ENCODE measurements at regions of chr12 and their contacts with region 1.

Region 1: GRCh38 chr12:57063991-57064685 is 14.2 kb upstream of the MYO1A start:
- DNase-seq: no peak
- H3K4me3 ChIP-seq: no peak overlapping the region
- H3K27ac ChIP-seq: peak overlapping the region in 1 of 4 donors; percentile 35
- H3K4me1 ChIP-seq: peaks cover 0 to 2% (median 0%) of the 10 kb centered on the region in 4 donors
- H3K27me3 ChIP-seq: no peaks in the 10 kb centered on the region
- CTCF ChIP-seq: no peak
- EP300 ChIP-seq: no peak
- POLR2A ChIP-seq: no peak

Region 2: DNA sequence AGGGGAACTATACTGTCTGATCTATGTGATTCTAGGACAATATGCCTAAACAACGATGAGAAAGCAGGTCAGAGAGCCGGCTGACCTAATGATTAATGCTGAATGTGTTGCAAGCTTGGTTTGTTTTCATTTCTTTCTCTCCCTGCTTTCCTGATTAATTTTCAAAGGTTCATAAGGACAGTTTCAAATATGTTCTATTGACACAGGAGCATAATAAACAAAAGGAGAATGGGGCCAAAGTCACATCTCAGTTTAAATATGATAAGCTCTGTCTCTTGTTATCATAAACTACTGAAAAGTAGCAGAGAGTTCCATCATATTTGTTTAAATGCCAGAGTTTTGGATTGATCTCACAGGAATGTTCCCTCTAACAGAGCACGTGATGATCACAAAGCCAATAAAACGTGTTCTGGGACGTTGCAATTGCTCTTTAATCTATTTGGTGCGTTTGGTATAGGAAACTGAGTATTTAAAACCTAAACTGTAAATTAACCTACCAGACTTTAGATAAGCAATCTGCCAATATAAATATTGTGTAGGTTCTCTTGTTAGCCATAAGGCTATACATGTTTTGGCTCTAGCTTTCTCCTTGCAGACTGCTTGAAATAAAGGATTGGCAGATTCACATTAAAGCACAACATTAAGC is 304.8 kb before region 1 on chr12:
- intact Hi-C with region 1: loop called (anchors 5 kb)
- DNase-seq: no peak
- H3K4me3 ChIP-seq: no peak overlapping the region
- H3K27ac ChIP-seq: no peak overlapping the region
- H3K4me1 ChIP-seq: peaks cover 0 to 5% (median 2%) of the 10 kb centered on the region in 4 donors
- H3K27me3 ChIP-seq: no peaks in the 10 kb centered on the region
- CTCF ChIP-seq: no peak
- EP300 ChIP-seq: no peak
- POLR2A ChIP-seq: no peak

Measured in sigmoid colon (tissue), 7 donors.